GM12878 (cell line): ENCODE measurements at regions of chr19 and their contacts with region 1.

Region 1: GRCh38 chr19:5057861-5058260 is 88.9 kb downstream of the KDM4B start:
- DNase-seq: no peak
- ATAC-seq: peak; percentile 86
- H3K4me3 ChIP-seq: no peak overlapping the region
- H3K27ac ChIP-seq: no peak overlapping the region
- H3K4me1 ChIP-seq: no peaks in the 10 kb centered on the region
- H3K27me3 ChIP-seq: no peaks in the 10 kb centered on the region
- CTCF ChIP-seq: no peak
- EP300 ChIP-seq: no peak
- POLR2A ChIP-seq: no peak
- RAD21 ChIP-seq: no peak

Region 2: DNA sequence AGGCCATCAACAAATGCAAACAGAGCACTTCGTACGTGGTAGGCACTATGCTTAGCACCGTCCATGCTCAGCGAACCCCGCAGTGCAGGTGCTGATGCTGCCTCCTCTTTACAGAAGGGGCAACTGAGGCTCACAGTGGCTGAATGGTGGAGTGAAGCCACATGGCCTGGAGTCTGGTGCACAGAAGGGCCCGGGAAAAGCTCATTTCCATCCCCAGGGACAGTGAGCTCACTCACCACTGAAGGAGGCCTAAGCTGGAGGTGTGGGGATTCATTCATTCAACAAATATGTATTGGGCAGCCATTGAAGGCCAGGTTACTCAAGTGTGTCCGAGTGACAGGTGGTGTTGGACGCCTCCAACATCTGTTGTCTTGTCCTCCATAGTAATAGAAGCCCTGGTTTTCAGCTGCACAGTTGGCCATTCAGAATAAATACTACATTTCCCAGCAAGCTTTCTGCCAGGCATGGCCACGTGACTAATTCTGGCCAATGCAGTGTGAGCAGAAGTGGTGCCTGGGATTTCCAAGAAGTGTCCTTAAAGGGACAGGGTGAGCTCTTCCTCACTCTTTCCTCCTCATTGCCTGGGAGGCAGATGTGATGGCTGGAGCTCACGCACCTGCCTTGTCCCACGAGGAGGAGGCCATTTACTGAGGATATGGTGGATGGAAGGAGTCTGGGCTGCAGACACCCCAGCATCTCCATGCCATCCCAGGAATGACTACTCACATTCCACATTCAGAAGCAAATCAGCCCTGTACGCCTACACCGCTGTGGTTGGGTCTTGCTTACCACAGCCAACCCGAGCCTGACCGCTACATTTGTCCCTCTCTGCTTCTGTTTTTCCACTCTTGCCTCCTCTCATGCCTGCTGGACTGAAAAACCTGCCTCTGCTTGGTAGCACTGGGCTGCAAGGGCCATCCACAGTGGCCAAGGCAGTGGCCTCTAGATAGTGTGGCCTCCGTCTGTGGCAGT is 395.0 kb after region 1 on chr19:
- CTCF ChIA-PET with region 1: no interaction called
- POLR2A ChIA-PET with region 1: no interaction called
- RAD21 ChIA-PET with region 1: no interaction called
- SMC1A ChIA-PET with region 1: no interaction called
- in situ Hi-C with region 1: no loop called
- intact Hi-C with region 1: no loop called
- DNase-seq: no peak
- ATAC-seq: no peak
- H3K4me3 ChIP-seq: no peak overlapping the region
- H3K27ac ChIP-seq: no peak overlapping the region
- H3K4me1 ChIP-seq: no peaks in the 10 kb centered on the region
- H3K27me3 ChIP-seq: no peaks in the 10 kb centered on the region
- CTCF ChIP-seq: no peak
- EP300 ChIP-seq: no peak
- POLR2A ChIP-seq: no peak
- RAD21 ChIP-seq: no peak

Region 3: DNA sequence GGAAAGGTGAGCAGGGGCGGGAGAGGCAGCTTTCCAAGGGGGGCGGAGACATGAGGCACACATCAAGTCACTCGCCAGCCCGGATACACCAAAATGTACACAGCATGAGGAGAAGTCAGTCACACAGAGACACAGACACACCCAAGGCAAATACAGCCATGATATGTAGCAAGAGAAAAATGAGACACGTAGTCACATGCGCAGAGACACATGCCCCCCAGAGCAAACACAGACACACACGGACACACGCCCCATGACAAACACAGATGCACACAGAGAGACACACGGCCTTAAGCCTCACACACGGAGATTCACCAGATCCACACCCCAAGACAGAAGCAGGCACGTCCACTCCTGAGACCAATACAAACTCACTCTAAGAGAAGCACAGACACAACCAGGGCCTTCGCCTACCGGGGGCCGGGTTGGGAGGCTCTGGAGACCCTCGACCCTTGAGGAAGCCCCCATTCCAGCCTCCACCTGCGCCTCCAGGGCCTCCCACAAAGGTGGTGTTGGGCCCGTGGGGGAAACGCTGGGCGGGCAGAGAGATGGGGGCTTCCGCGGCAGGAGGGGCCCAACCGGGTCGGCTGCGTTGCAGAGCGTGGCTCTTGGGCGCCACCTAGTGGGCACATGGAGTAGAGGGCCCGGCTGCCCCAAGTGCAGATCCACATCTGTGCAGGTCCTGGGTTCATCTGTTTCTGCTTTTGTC is 520.1 kb after region 1 on chr19:
- CTCF ChIA-PET with region 1: no interaction called
- POLR2A ChIA-PET with region 1: no interaction called
- RAD21 ChIA-PET with region 1: no interaction called
- SMC1A ChIA-PET with region 1: no interaction called
- in situ Hi-C with region 1: loop called (anchors 5 kb)
- intact Hi-C with region 1: no loop called
- DNase-seq: no peak
- ATAC-seq: peak; percentile 98
- H3K4me3 ChIP-seq: no peak overlapping the region
- H3K27ac ChIP-seq: no peak overlapping the region
- H3K4me1 ChIP-seq: no peaks in the 10 kb centered on the region
- H3K27me3 ChIP-seq: no peaks in the 10 kb centered on the region
- CTCF ChIP-seq: peak; percentile 92 to 98 (median 92)
- EP300 ChIP-seq: no peak
- POLR2A ChIP-seq: no peak
- RAD21 ChIP-seq: peak; percentile 79